Endothelial cell of umbilical vein (primary cell): ENCODE measurements at regions of chr2 and their contacts with region 1.

Region 1: GRCh38 chr2:192162392-192163042 is 32.2 kb downstream of the TMEFF2 start:
- DNase-seq: peak; percentile 87
- H3K4me3 ChIP-seq: no peak overlapping the region
- H3K27ac ChIP-seq: peak overlapping the region; percentile 16
- H3K4me1 ChIP-seq: peaks cover 12% of the 10 kb centered on the region
- H3K27me3 ChIP-seq: no peaks in the 10 kb centered on the region
- CTCF ChIP-seq: peak; percentile 68 to 73
- POLR2A ChIP-seq: no peak

Region 2: DNA sequence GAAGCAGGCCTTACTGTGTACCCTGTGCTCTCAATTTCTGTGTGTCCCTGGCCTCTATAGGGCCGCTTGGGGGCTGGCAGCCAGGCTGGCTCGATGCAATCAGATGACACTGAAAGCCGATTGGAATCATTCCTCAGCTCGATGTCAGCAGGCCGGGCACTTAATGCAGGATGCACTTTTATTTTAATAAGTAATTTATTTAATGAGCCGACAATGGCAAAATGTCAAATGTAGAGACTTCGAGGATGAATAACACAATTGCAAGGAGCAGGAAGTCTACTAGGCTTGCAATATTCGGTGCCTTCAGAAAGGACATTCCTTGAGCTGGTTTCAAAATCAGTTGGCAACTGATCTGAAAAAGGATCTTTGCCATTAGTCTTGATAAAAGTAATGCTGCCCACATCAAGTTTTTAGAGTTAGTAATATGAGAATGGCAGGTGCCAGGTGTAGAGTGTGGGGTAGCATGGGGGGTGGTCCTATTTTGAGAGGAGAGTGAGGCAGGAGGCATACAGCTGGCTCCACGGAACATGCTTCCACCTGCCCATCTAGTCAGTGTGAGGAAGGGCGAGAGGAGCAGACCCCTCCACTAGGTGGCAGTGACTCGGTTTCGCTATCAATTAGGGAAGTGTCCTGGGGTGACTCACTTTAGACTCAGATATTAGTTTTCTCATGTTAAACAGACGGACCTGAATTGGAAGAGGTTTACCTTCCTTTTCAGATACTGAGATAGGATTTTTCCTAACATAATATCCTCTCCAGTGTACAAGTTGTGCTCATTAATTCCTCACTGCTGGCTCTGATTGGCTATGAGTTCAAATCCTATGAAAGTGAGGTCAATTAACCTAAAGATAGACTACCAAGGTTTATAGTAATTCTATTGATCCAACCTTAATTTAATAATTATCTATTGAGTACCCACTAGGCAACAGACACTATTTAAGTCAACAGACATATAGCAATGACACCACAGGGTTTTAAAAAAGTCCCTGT is 403.7 kb before region 1 on chr2:
- CTCF ChIA-PET with region 1: interaction called, 42 read pairs
- POLR2A ChIA-PET with region 1: no interaction called
- dilution Hi-C with region 1: no loop called
- intact Hi-C with region 1: loop called (anchors 2 kb)
- DNase-seq: peak; percentile 66
- H3K4me3 ChIP-seq: no peak overlapping the region
- H3K27ac ChIP-seq: no peak overlapping the region
- H3K4me1 ChIP-seq: no peaks in the 10 kb centered on the region
- H3K27me3 ChIP-seq: peaks cover 10 to 14% of the 10 kb centered on the region in 2 experiments
- CTCF ChIP-seq: peak; percentile 79 to 81
- POLR2A ChIP-seq: no peak

Region 3: DNA sequence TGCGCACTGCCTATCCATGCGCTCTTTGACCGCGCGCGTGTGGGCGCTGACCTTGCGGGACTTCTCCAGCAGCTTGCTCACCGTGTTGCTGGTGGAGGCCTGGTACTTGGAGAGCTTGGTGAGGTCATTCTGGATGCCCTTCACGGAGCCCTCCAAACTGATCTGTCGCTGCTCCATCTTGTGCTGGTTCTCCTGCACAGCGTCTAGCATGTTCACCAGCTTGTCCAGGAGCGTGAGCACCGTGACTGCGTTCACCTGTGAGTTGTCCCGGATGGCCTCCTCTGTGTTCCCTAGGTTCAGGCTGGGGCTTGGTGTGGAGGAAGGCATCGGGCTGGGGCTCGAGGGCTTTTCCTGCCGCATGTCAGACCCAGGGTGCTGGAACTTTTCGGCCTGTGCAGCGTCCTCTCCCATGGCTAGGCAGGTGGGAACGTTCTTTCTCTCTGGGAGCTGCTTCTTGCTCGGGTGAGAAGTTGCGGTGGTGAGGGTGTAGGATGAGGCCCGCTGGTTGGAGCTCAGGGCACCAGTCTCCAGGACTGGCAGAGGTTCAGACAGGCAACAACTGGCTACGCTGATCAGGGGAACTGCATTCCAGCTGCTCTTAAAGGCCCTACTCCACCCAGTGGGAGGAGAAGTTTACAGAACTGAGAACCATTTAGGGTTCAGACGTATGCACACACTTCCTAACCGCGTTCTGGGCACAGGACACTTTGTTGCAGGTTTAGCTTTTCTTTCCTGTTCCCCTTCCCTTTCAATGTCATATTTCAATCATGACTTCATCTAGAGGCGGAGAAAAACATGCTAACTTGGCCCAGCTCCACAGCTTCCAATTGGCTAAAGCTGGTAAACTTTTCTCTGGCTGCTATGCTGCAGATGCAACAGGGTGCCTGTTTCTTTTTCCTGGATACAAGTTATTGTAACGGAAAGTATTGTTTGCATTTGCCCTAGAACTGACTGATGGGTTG is 315.7 kb before region 1 on chr2 and contains the start of gene CAVIN2:
- CTCF ChIA-PET with region 1: interaction called, 186 read pairs
- POLR2A ChIA-PET with region 1: interaction called, 22 read pairs
- dilution Hi-C with region 1: no loop called
- intact Hi-C with region 1: loop called (anchors 1 kb)
- DNase-seq: peak; percentile 100
- H3K4me3 ChIP-seq: peak within 1 kb of the TSS; percentile 82 to 99 (median 95)
- H3K27ac ChIP-seq: peak within 1 kb of the TSS; percentile 76
- H3K4me1 ChIP-seq: peaks cover 21% of the 10 kb centered on the region
- H3K27me3 ChIP-seq: no peaks in the 10 kb centered on the region
- CTCF ChIP-seq: peak in 1 of 2 donors; percentile 17
- POLR2A ChIP-seq: peak; percentile 98
- total RNA-seq, gene CAVIN2: 171 and 202 TPM in 2 replicates

Region 4: GRCh38 chr2:191910518-191910917 is 252.0 kb before region 1 on chr2:
- CTCF ChIA-PET with region 1: interaction called, 19 read pairs
- POLR2A ChIA-PET with region 1: no interaction called
- dilution Hi-C with region 1: no loop called
- intact Hi-C with region 1: no loop called
- DNase-seq: peak; percentile 92
- H3K4me3 ChIP-seq: no peak overlapping the region
- H3K27ac ChIP-seq: peak overlapping the region; percentile 36
- H3K4me1 ChIP-seq: peaks cover 34% of the 10 kb centered on the region
- H3K27me3 ChIP-seq: no peaks in the 10 kb centered on the region
- CTCF ChIP-seq: no peak
- POLR2A ChIP-seq: no peak

Region 5: GRCh38 chr2:191957996-191958860 is 204.3 kb before region 1 on chr2:
- CTCF ChIA-PET with region 1: interaction called, 10 read pairs
- POLR2A ChIA-PET with region 1: no interaction called
- dilution Hi-C with region 1: no loop called
- intact Hi-C with region 1: no loop called
- DNase-seq: peak; percentile 71
- H3K4me3 ChIP-seq: no peak overlapping the region
- H3K27ac ChIP-seq: no peak overlapping the region
- H3K4me1 ChIP-seq: peaks cover 21% of the 10 kb centered on the region
- H3K27me3 ChIP-seq: no peaks in the 10 kb centered on the region
- CTCF ChIP-seq: no peak
- POLR2A ChIP-seq: no peak

Region 6: DNA sequence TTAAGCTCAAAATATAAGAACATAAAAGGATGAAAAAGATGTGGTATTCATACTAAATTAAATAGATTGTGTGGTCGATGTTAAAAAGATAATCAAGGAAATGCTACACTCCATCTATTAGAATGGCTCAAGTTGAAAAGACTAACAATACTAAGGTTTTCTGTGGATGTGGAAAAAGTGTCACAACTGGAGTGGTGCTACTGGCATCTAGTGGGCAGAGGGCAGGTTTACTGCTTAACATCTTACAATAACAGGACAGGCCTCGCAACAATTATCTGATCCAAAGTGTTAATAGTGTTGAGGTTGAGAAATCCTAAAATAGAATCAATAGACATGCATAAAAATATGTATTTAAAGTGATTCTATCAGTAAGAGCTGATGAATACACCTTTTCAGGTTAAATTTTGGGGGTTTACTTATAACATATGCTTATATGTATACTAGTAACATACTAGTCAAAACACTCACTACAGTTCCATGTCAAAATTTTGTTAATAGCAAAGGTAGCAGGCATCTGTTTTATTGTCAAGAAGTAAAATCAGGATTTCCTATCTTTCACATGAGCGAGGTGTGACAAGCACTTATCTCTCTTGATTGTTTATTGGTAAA is 123.7 kb after region 1 on chr2:
- CTCF ChIA-PET with region 1: interaction called, 18 read pairs
- POLR2A ChIA-PET with region 1: no interaction called
- dilution Hi-C with region 1: no loop called
- intact Hi-C with region 1: no loop called
- DNase-seq: peak; percentile 73
- H3K4me3 ChIP-seq: no peak overlapping the region
- H3K27ac ChIP-seq: no peak overlapping the region
- H3K4me1 ChIP-seq: no peaks in the 10 kb centered on the region
- H3K27me3 ChIP-seq: peaks cover 1 to 4% of the 10 kb centered on the region in 2 experiments
- CTCF ChIP-seq: peak; percentile 45 to 55
- POLR2A ChIP-seq: no peak